AG04450 (cell line): ENCODE measurements at regions of chr2 and their contacts with region 1.

Region 1: DNA sequence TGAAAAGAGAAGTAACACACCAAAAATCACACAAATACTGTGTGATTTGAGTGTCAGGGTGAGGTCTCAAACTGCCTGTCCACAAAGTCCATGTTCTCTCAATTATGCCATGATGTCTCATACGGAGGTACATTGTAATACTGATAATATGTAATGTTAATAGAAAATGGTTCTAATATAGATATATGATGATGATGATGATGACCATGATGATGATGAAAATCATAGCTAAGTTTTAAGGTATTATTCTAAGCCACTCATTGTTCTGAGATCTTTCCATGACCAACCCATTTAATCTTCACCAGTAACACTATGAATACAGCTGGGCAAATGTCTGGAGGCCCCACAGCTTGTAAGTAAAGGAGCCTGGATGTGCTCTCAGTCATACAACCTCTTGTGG is 196.3 kb upstream of the KLHL29 start:
- DNase-seq: no peak
- H3K4me3 ChIP-seq: no peak overlapping the region
- H3K27ac ChIP-seq: no peak overlapping the region
- H3K27me3 ChIP-seq: no peaks in the 10 kb centered on the region
- CTCF ChIP-seq: no peak

Region 2: GRCh38 chr2:23132000-23132399 is 56.7 kb before region 1 on chr2:
- CTCF ChIA-PET with region 1: no interaction called
- POLR2A ChIA-PET with region 1: interaction called, 13 read pairs
- DNase-seq: no peak
- H3K4me3 ChIP-seq: no peak overlapping the region
- H3K27ac ChIP-seq: no peak overlapping the region
- H3K27me3 ChIP-seq: no peaks in the 10 kb centered on the region
- CTCF ChIP-seq: no peak